ENCODE measurements at regions of chr9 and their contacts with region 1.

Region 1: DNA sequence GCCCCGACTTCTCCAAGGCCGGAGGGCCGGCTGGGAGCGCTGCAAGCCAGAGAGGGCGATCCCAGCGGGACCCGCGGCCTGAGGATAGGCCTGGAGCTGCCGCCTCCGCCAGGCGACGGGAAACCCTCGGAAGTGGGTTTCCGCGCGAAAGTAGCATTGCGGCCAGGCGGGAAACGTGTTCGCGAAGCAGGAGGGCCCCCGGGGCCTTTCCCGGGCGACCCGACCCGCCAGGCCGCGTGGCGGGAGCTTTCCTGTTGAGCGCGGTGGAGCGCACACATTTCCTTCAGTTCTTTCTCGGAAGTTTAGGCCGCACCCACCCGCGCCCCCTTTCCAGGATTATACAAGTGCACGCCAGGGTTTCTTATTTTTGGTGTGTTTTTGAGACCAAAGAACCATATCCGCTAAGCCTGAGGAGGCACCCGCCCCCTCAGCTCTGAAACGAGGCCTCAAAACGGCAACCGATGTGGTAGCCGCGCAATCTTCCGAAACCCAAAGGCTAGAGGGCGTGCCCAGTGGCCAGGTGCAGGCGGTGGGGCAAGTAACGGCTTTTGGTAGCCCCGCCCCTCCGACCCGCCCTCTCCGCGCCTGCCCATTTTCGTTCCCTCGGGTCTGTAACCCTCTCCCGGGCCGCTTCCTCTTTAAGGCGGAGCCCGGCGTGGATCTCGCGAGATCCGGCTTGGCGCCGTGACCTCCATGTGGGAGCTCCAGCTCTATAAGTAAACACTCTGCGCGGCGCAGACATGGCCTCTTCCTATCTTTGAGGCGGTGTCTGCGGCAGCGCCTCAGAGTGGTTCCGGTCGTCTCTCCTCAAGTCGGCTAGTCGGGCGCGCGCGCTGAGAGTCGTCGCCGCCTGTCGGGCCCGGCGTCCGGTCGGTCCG is at the start of gene UHRF2:
- DNase-seq: peak; percentile 100
- ATAC-seq: peak; percentile 91
- H3K4me3 Mint-ChIP-seq: peak within 1 kb of the TSS; percentile 86
- H3K27ac Mint-ChIP-seq: peak within 1 kb of the TSS; percentile 95
- H3K4me1 Mint-ChIP-seq: peaks cover 32% of the 10 kb centered on the region
- H3K27me3 Mint-ChIP-seq: peaks cover 22% of the 10 kb centered on the region
- total RNA-seq, gene UHRF2: 59.3 to 68.6 TPM

Region 2: DNA sequence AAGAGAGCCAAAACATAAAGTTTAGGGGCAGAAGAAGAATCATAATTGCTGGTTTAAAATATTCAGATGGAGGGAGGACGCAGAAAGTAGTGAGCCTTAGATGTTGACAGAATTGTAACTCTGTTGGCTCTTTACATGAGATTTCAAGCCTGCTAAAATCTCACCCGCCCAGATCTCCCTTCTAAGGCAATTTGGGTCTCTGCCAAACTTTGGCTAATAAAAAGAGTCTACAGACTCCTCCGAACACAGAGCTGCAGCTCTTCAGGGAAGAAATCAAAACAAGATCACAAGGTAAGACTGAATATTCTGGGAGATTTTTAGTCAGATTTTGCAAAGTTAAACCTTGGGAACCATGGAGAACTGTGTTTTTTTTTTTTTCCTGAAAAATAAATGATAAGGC is 197.2 kb before region 1 on chr9 and contains the start of gene IL33:
- CTCF ChIA-PET with region 1: no interaction called
- POLR2A ChIA-PET with region 1: no interaction called
- DNase-seq: no peak
- ATAC-seq: no peak
- H3K4me3 Mint-ChIP-seq: no peak within 1 kb of the TSS
- H3K27ac Mint-ChIP-seq: no peak within 1 kb of the TSS
- H3K4me1 Mint-ChIP-seq: no peaks in the 10 kb centered on the region
- H3K27me3 Mint-ChIP-seq: peaks cover 17% of the 10 kb centered on the region
- total RNA-seq, gene IL33: not detected

Region 3: GRCh38 chr9:6428940-6429889 is 16.5 kb after region 1 on chr9:
- CTCF ChIA-PET with region 1: interaction called, 12 read pairs
- POLR2A ChIA-PET with region 1: interaction called, 63 read pairs
- DNase-seq: peak; percentile 33
- ATAC-seq: peak; percentile 88
- H3K4me3 Mint-ChIP-seq: peak overlapping the region; percentile 38
- H3K27ac Mint-ChIP-seq: peak overlapping the region; percentile 72
- H3K4me1 Mint-ChIP-seq: peaks cover 67% of the 10 kb centered on the region
- H3K27me3 Mint-ChIP-seq: no peaks in the 10 kb centered on the region